T-cell (primary cell): ENCODE measurements at regions of chr14 and their contacts with region 1.

Region 1: DNA sequence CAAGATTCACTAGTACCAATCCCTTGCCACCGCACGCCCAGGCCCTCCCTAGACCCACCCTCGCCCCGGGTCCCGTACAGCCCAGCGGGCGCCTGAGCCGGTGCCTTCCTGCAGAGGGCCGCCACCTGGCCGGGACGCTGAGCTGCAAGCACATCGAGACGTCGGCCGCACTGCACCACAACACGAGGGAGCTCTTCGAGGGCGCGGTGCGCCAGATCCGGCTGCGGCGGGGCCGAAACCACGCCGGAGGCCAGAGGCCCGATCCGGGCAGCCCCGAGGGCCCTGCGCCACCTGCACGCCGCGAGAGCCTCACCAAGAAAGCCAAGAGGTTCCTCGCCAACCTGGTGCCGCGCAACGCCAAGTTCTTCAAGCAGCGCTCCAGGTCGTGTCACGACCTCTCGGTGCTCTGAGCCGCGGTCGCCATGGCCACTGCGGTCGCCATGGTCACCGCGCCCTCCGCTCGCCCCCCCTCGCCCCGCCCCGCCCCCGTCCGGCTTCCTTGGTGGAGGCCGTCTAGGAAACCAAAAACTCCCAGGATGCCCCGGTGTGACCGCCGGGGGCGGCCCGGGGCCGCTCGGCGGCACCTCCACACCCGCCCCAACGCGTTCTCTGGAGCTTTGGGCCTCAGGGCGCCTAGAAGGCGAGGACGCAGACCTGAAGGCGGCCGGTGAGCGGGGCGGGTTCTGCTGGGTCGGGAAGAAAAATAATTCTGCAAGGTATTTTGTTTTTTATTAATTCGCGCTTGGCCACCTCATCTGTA is 3.7 kb downstream of the REM2 start:
- DNase-seq: peak; percentile 48 to 80 (median 62)
- ATAC-seq: peak; percentile 69 to 76 (median 74)
- H3K4me3 ChIP-seq: peak overlapping the region; percentile 60 to 65
- H3K4me3 Mint-ChIP-seq: peak overlapping the region; percentile 87 to 90 (median 88)
- H3K27ac ChIP-seq: peak overlapping the region; percentile 67
- H3K27ac Mint-ChIP-seq: peak overlapping the region; percentile 94 to 96
- H3K4me1 ChIP-seq: peaks cover 22 to 60% of the 10 kb centered on the region in 2 experiments
- H3K4me1 Mint-ChIP-seq: peaks cover 57 to 72% (median 65%) of the 10 kb centered on the region in 3 donors
- H3K27me3 ChIP-seq: no peaks in the 10 kb centered on the region
- H3K27me3 Mint-ChIP-seq: no peaks in the 10 kb centered on the region

Region 2: GRCh38 chr14:21579976-21580375 is 1306.7 kb before region 1 on chr14 and contains the start of gene OR10G3:
- CTCF ChIA-PET with region 1: no interaction called
- POLR2A ChIA-PET with region 1: no interaction called
- DNase-seq: no peak
- ATAC-seq: no peak
- H3K4me3 ChIP-seq: no peak within 1 kb of the TSS
- H3K4me3 Mint-ChIP-seq: no peak within 1 kb of the TSS
- H3K27ac ChIP-seq: no peak within 1 kb of the TSS
- H3K27ac Mint-ChIP-seq: no peak within 1 kb of the TSS
- H3K4me1 ChIP-seq: no peaks in the 10 kb centered on the region
- H3K4me1 Mint-ChIP-seq: no peaks in the 10 kb centered on the region
- H3K27me3 ChIP-seq: peaks cover 0 to 20% of the 10 kb centered on the region in 2 experiments
- H3K27me3 Mint-ChIP-seq: peaks cover 3 to 15% of the 10 kb centered on the region in 2 donors
- total RNA-seq, gene OR10G3: not detected

Region 3: GRCh38 chr14:22598099-22598899 is 288.4 kb before region 1 on chr14 and contains the start of gene ABHD4:
- CTCF ChIA-PET with region 1: no interaction called
- POLR2A ChIA-PET with region 1: interaction called in 1 of 2 experiments, 10 read pairs
- DNase-seq: peak in 30 of 35 experiments; percentile 12 to 71 (median 37)
- ATAC-seq: peak; percentile 83 to 90 (median 89)
- H3K4me3 ChIP-seq: peak within 1 kb of the TSS; percentile 72 to 85
- H3K4me3 Mint-ChIP-seq: peak within 1 kb of the TSS; percentile 96 to 99 (median 97)
- H3K27ac ChIP-seq: peak within 1 kb of the TSS; percentile 17
- H3K27ac Mint-ChIP-seq: peak within 1 kb of the TSS; percentile 80 to 93
- H3K4me1 ChIP-seq: peaks cover 3 to 17% of the 10 kb centered on the region in 2 experiments
- H3K4me1 Mint-ChIP-seq: peaks cover 32 to 38% (median 37%) of the 10 kb centered on the region in 3 donors
- H3K27me3 ChIP-seq: peaks cover 0 to 5% of the 10 kb centered on the region in 2 experiments
- H3K27me3 Mint-ChIP-seq: peaks cover 0 to 3% of the 10 kb centered on the region in 2 donors
- total RNA-seq, gene ABHD4: 10.1 to 20.9 (median 17.3) TPM

Region 4: DNA sequence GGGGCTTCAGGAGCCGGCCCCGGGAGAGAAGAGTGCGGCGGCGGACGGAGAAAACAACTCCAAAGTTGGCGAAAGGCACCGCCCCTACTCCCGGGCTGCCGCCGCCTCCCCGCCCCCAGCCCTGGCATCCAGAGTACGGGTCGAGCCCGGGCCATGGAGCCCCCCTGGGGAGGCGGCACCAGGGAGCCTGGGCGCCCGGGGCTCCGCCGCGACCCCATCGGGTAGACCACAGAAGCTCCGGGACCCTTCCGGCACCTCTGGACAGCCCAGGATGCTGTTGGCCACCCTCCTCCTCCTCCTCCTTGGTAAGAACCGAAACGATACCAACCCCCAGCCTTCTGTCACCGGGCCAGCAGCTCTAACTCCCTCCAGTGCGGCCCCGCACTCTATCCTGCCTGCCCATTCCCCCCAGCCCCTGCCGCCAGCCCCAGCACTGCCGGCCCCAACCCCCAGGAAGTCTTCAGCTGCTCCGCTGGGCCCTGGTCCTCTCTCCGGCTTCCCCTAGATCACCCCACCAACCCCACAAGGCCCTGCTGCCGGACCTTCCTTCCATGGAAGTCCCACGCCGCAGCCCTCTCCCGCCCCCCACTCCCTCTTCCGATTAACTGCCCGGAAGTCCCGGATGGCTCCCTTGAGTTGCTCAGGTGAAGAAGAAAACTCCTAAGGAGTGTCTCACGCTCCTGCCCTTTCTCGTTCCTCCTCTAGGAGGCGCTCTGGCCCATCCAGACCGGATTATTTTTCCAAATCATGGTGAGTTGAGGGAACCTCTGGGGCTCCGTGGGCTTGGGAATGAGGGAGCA is 14.4 kb before region 1 on chr14:
- CTCF ChIA-PET with region 1: interaction called, 8 to 35 read pairs
- POLR2A ChIA-PET with region 1: interaction called in 1 of 2 experiments, 6 read pairs
- DNase-seq: peak in 34 of 35 experiments; percentile 29 to 84 (median 57)
- ATAC-seq: peak; percentile 30 to 55 (median 44)
- H3K4me3 ChIP-seq: peak overlapping the region; percentile 78 to 80
- H3K4me3 Mint-ChIP-seq: peak overlapping the region; percentile 86 to 92 (median 91)
- H3K27ac ChIP-seq: peak overlapping the region; percentile 91
- H3K27ac Mint-ChIP-seq: peak overlapping the region; percentile 97 to 98
- H3K4me1 ChIP-seq: peaks cover 12 to 56% of the 10 kb centered on the region in 2 experiments
- H3K4me1 Mint-ChIP-seq: peaks cover 29 to 45% (median 45%) of the 10 kb centered on the region in 3 donors
- H3K27me3 ChIP-seq: no peaks in the 10 kb centered on the region
- H3K27me3 Mint-ChIP-seq: no peaks in the 10 kb centered on the region

Region 5: DNA sequence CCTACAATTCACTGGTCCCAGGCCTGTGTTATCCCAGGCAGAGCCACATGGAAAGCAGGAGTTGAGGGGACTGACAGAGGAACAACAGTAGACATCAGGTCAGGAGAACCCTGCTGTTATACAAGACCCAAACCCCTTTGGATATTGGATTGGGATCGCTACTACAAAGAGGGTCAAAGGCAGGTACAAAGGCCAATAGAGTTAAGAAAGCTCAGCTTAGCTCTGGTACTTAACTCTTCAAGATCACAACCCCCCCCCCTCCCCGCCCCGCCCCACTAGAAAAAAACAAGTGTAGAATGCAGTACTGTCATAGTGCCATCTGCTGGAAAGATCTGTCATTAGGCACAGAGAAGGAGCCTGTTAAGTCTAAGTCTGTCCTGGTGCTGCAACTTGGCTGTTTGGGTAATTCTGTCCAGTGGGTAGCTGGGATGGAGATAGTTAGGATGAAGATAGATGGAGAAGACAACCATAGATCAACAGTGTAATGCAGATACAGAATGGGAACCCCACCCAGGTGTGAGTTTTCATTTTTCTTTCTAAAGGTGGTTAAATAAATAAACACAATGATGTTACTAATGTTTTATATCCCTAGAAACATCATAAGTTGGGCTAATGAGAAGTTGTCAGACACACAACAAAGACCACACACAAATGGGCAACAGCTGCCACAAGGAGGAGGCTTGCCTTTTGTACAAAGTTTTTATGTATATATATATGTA is 13.6 kb after region 1 on chr14:
- CTCF ChIA-PET with region 1: interaction called, 11 to 12 read pairs
- POLR2A ChIA-PET with region 1: interaction called, 3 to 4 read pairs
- DNase-seq: peak in 26 of 35 experiments; percentile 17 to 85 (median 39)
- ATAC-seq: peak; percentile 73 to 81 (median 80)
- H3K4me3 ChIP-seq: no peak overlapping the region
- H3K4me3 Mint-ChIP-seq: no peak overlapping the region
- H3K27ac ChIP-seq: no peak overlapping the region
- H3K27ac Mint-ChIP-seq: peak overlapping the region in 1 of 2 donors; percentile 41
- H3K4me1 ChIP-seq: peaks cover 2 to 10% of the 10 kb centered on the region in 2 experiments
- H3K4me1 Mint-ChIP-seq: peaks cover 8 to 11% (median 9%) of the 10 kb centered on the region in 3 donors
- H3K27me3 ChIP-seq: no peaks in the 10 kb centered on the region
- H3K27me3 Mint-ChIP-seq: no peaks in the 10 kb centered on the region

Region 6: DNA sequence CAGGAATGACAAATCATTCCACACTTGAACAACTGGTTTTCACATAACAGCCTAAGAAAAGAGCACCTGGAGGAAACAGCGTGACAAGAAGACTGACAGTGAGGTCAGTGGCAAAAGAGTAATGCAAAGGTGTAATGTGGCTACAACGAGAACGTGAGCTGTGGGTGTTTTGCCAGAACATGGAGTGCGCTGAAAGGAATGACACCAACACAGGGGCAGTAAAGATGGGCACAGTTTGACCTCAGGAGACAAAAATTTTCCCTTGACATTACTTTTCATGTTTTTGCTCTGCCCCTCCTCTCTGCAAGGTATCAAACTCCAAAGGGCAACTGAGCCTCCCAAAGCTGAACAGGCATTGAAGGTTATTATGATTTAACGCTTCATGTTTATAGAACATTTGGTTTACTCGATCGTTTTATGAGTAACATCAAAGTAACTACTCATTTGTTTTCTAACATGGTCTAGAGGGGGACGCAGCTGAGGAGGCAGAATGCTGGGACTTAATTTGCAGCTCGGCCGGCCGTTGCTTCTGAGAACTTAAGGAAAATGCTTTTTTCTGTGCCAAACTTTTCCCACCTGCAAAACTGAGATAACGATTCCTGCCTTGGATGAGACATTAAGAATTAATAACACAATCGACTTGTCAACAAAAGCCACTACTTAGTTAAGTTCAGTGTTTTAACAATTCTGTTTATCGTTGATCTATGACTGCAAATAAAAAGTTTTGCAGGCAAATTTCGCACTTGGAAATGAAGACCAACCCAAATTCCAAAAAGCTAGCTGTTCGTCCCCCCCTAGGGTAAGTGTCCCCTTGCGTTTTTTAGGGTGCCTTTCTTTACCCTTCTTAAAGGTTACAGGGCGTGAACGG is 69.3 kb after region 1 on chr14:
- CTCF ChIA-PET with region 1: no interaction called
- POLR2A ChIA-PET with region 1: interaction called in 1 of 2 experiments, 12 read pairs
- DNase-seq: no peak
- ATAC-seq: no peak
- H3K4me3 ChIP-seq: peak overlapping the region; percentile 81 to 86
- H3K4me3 Mint-ChIP-seq: peak overlapping the region; percentile 88 to 91 (median 91)
- H3K27ac ChIP-seq: peak overlapping the region; percentile 83
- H3K27ac Mint-ChIP-seq: peak overlapping the region; percentile 91 to 93
- H3K4me1 ChIP-seq: peaks cover 0 to 19% of the 10 kb centered on the region in 2 experiments
- H3K4me1 Mint-ChIP-seq: peaks cover 7 to 18% (median 15%) of the 10 kb centered on the region in 3 donors
- H3K27me3 ChIP-seq: no peaks in the 10 kb centered on the region
- H3K27me3 Mint-ChIP-seq: no peaks in the 10 kb centered on the region